ENCODE measurements at regions of chr20 and their contacts with region 1.

Region 1: GRCh38 chr20:36460648-36461599 is 80.4 kb upstream of the MYL9 start:
- DNase-seq: peak; percentile 65
- ATAC-seq: peak; percentile 76
- H3K4me3 ChIP-seq: no peak overlapping the region
- H3K27ac ChIP-seq: peak overlapping the region; percentile 77
- H3K4me1 ChIP-seq: peaks cover 31% of the 10 kb centered on the region
- H3K27me3 ChIP-seq: no peaks in the 10 kb centered on the region
- CTCF ChIP-seq: no peak
- EP300 ChIP-seq: no peak
- POLR2A ChIP-seq: peak; percentile 89
- RAD21 ChIP-seq: no peak

Region 2: GRCh38 chr20:36493013-36493800 is 32.3 kb after region 1 on chr20:
- CTCF ChIA-PET with region 1: interaction called, 12 read pairs
- POLR2A ChIA-PET with region 1: interaction called, 3 read pairs
- RAD21 ChIA-PET with region 1: interaction called, 17 read pairs
- SMC1A ChIA-PET with region 1: interaction called, 11 read pairs
- in situ Hi-C with region 1: no loop called
- intact Hi-C with region 1: no loop called
- DNase-seq: no peak
- ATAC-seq: peak; percentile 42
- H3K4me3 ChIP-seq: no peak overlapping the region
- H3K27ac ChIP-seq: peak overlapping the region; percentile 59; the same call in 1 of the 2 replicates
- H3K4me1 ChIP-seq: peaks cover 21% of the 10 kb centered on the region
- H3K27me3 ChIP-seq: no peaks in the 10 kb centered on the region
- CTCF ChIP-seq: peak; percentile 21 to 51 (median 48); a peak in 4 of 6 replicates
- EP300 ChIP-seq: no peak
- POLR2A ChIP-seq: no peak
- RAD21 ChIP-seq: peak; percentile 52

Region 3: DNA sequence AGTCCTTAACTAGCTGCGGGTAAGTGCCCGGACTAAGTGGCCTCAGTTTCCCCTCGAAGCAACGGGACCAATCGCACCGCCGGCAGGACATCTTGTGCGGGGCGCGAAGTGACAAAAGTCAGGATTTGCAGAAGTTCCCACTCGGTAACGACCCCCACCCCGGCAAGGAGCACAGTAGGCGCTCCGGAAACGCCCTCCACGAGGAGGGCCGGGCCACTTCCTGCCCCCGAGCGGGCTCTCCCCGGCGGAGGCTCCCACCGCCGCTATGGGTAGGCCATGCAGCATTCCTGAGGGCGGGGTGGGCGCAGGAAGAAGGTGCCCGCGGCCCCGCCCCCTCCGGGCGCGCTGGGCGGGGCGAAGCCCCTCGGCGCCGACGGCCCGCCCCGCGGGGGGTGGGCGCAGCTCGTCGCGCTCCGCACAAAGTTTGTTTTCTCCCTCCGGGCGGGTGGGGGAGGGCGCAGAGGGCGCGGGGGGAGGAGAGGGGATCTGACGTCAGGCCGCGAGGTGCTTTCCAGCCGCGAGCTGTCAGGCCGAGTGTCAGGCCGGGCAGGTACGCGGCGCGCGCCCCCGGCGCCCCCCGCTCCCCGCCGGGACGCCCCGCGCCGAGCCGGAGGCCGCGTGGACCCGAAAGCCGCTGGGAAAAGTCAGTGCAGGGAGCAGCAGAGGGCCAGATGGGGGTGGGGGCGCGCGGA is 112.3 kb after region 1 on chr20 and contains the start of gene TGIF2:
- CTCF ChIA-PET with region 1: interaction called, 3 read pairs
- POLR2A ChIA-PET with region 1: interaction called, 3 read pairs
- RAD21 ChIA-PET with region 1: no interaction called
- SMC1A ChIA-PET with region 1: interaction called, 4 read pairs
- in situ Hi-C with region 1: no loop called
- intact Hi-C with region 1: loop called (anchors 10 kb)
- DNase-seq: peak; percentile 48
- ATAC-seq: peak; percentile 81
- H3K4me3 ChIP-seq: peak within 1 kb of the TSS; percentile 94
- H3K27ac ChIP-seq: peak within 1 kb of the TSS; percentile 96
- H3K4me1 ChIP-seq: peaks cover 5% of the 10 kb centered on the region
- H3K27me3 ChIP-seq: no peaks in the 10 kb centered on the region
- CTCF ChIP-seq: no peak
- EP300 ChIP-seq: 0 out of 4 replicates have a peak, but pooled peaks of 1 of the 2 experiments have one; percentile 27
- POLR2A ChIP-seq: peak; percentile 85
- RAD21 ChIP-seq: no peak
- polyA plus RNA-seq, gene TGIF2: 13.1 to 26.4 TPM

Region 4: DNA sequence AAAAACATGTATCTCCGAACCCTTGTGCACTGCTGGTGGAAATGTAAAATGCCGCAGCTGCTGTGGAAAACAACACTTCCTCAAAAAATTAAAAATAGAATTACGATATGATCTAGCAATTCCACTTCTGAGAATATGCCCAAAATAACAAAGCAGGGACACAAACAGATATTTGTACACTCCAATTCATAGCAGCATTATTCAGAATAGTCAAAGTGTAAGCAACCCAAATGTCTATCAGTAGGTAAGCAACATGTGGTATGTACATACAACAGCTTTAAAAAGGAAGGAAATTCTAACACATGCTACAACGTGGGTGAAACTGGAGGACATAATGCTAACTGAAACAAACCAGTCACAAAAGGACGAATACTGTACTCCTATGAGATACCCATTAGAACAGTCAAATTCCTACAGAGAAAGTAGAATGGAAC is 139.0 kb after region 1 on chr20:
- CTCF ChIA-PET with region 1: interaction called, 5 read pairs
- POLR2A ChIA-PET with region 1: interaction called, 14 read pairs
- RAD21 ChIA-PET with region 1: interaction called, 6 read pairs
- SMC1A ChIA-PET with region 1: interaction called, 21 read pairs
- in situ Hi-C with region 1: no loop called
- intact Hi-C with region 1: loop called (anchors 5 kb)
- DNase-seq: peak; percentile 40
- ATAC-seq: peak; percentile 20
- H3K4me3 ChIP-seq: no peak overlapping the region
- H3K27ac ChIP-seq: peak overlapping the region; percentile 80
- H3K4me1 ChIP-seq: peaks cover 43% of the 10 kb centered on the region
- H3K27me3 ChIP-seq: no peaks in the 10 kb centered on the region
- CTCF ChIP-seq: no peak
- EP300 ChIP-seq: no peak
- POLR2A ChIP-seq: no peak
- RAD21 ChIP-seq: no peak

Region 5: GRCh38 chr20:36754656-36755222 is 293.8 kb after region 1 on chr20:
- CTCF ChIA-PET with region 1: no interaction called
- POLR2A ChIA-PET with region 1: no interaction called
- RAD21 ChIA-PET with region 1: interaction called, 4 read pairs
- SMC1A ChIA-PET with region 1: no interaction called
- in situ Hi-C with region 1: no loop called
- intact Hi-C with region 1: loop called (anchors 10 kb)
- DNase-seq: no peak
- ATAC-seq: peak; percentile 85
- H3K4me3 ChIP-seq: no peak overlapping the region
- H3K27ac ChIP-seq: 0 out of 2 replicates have a peak overlapping the region, but pooled peaks have one; percentile 20
- H3K4me1 ChIP-seq: peaks cover 13% of the 10 kb centered on the region
- H3K27me3 ChIP-seq: no peaks in the 10 kb centered on the region
- CTCF ChIP-seq: peak; percentile 77 to 81 (median 79)
- EP300 ChIP-seq: no peak
- POLR2A ChIP-seq: no peak
- RAD21 ChIP-seq: peak; percentile 76